ENCODE measurements at regions of chr19 and their contacts with region 1.

Region 1: GRCh38 chr19:57819475-57820148 is 4.9 kb upstream of the ZNF552 start:
- DNase-seq: peak; percentile 89
- H3K4me3 ChIP-seq: peak overlapping the region; percentile 63 to 90 (median 76)
- H3K27ac ChIP-seq: peak overlapping the region; percentile 72 to 86 (median 81)
- H3K4me1 ChIP-seq: peaks cover 0 to 22% (median 17%) of the 10 kb centered on the region in 4 donors
- H3K27me3 ChIP-seq: no peaks in the 10 kb centered on the region
- CTCF ChIP-seq: no peak
- EP300 ChIP-seq: no peak
- POLR2A ChIP-seq: peak in 1 of 2 donors; percentile 17

Region 2: DNA sequence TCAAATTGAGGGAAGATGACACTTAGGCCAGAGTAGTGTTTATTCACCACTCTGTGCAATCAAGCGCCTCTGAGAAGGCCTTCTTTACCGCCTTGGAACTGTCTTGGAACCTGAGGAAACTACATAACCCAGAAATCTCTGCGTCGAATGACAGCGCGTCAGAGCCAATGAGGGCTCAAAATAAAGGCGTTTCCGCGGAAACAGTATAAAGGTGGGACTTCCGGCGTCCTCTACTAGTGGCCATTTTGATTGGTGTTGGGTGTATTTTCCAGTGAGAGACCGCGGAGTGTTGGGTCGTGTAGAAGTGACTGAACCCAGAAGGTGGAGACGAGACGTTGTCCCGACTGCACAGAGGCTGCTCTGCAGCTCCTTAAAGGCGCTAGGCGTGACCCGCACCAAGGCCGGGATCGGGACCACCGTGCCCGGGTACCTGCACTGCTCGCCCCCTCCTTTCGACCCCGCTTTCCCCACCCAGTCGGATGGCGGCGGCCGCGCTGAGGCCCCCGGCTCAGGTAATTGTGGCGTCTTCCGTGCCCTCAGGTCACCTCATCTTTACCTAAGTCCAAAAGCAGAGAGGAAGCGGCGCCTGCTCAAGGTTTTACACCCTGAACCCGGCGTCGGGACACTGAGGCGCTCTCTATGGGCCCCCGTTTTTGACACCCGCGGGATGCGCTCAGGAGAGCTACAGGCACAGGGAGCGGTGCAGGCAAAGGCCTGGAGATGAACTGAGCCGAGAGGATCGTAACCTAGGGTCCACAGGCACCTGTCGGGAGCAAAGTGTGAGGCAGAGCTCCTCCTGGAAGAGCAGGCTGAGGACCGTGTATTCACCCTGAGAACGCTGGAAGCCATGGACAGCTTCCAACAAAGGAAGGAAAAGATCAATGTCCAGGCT is 72.8 kb before region 1 on chr19 and contains the start of gene ZNF776:
- intact Hi-C with region 1: loop called (anchors 5 kb)
- DNase-seq: peak; percentile 87
- H3K4me3 ChIP-seq: peak within 1 kb of the TSS; percentile 67 to 91 (median 78)
- H3K27ac ChIP-seq: peak within 1 kb of the TSS; percentile 82 to 89 (median 84)
- H3K4me1 ChIP-seq: peaks cover 0 to 26% (median 22%) of the 10 kb centered on the region in 4 donors
- H3K27me3 ChIP-seq: no peaks in the 10 kb centered on the region
- CTCF ChIP-seq: no peak
- EP300 ChIP-seq: no peak
- POLR2A ChIP-seq: no peak
- total RNA-seq, gene ZNF776: 8.3 to 12.5 (median 11.5) TPM

Region 3: GRCh38 chr19:57769345-57770131 is 50.1 kb before region 1 on chr19 and contains the start of gene ZNF586:
- intact Hi-C with region 1: loop called (anchors 5 kb)
- DNase-seq: peak; percentile 93
- H3K4me3 ChIP-seq: peak within 1 kb of the TSS; percentile 87 to 98 (median 96)
- H3K27ac ChIP-seq: peak within 1 kb of the TSS; percentile 81 to 92 (median 86)
- H3K4me1 ChIP-seq: peaks cover 0 to 22% (median 16%) of the 10 kb centered on the region in 4 donors
- H3K27me3 ChIP-seq: no peaks in the 10 kb centered on the region
- CTCF ChIP-seq: no peak
- EP300 ChIP-seq: no peak
- POLR2A ChIP-seq: peak in 1 of 2 donors; percentile 18
- total RNA-seq, gene ZNF586: 14.7 to 17.3 (median 15.6) TPM

Region 4: DNA sequence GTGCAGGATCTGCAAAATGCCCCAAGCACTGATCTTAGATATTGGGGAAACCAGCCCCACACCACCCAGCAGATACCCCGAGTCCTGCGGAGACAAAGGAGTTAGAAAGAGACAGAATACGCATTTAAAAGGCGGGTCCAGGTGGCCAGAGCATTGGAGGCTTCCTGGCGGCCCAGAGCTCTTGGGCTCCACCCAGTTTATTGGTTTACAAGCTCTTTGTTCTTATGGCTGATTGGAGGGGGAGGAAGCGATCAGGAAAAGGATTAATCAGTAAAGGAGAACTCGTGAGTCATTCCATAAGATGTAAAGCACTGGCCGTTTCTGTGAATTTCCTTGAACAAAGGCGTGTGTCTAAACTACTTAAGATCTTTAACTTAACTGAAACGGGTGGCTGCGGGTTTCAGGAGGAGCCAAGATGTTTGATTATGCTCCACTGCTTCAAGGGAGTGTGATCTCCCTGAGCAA is 31.0 kb after region 1 on chr19:
- intact Hi-C with region 1: loop called (anchors 5 kb)
- DNase-seq: no peak
- H3K4me3 ChIP-seq: peak overlapping the region; percentile 57 to 70 (median 61)
- H3K27ac ChIP-seq: peak overlapping the region in 3 of 4 donors; percentile 69 to 73 (median 69)
- H3K4me1 ChIP-seq: peaks cover 0 to 16% (median 14%) of the 10 kb centered on the region in 4 donors
- H3K27me3 ChIP-seq: no peaks in the 10 kb centered on the region
- CTCF ChIP-seq: no peak
- EP300 ChIP-seq: no peak
- POLR2A ChIP-seq: no peak

Measured in sigmoid colon (tissue), 7 donors.